Esophagus squamous epithelium (tissue), 5 donors: ENCODE measurements at regions of chr5 and their contacts with region 1.

Region 1: GRCh38 chr5:902129-902916 is 9.6 kb downstream of the TRIP13 start:
- DNase-seq: no peak
- H3K4me3 ChIP-seq: no peak overlapping the region
- H3K27ac ChIP-seq: no peak overlapping the region
- H3K4me1 ChIP-seq: no peaks in the 10 kb centered on the region
- H3K27me3 ChIP-seq: no peaks in the 10 kb centered on the region
- CTCF ChIP-seq: no peak
- POLR2A ChIP-seq: no peak

Region 2: GRCh38 chr5:671459-672328 is 230.6 kb before region 1 on chr5:
- intact Hi-C with region 1: loop called (anchors 5 kb)
- DNase-seq: no peak
- H3K4me3 ChIP-seq: peak overlapping the region in 2 of 4 donors; percentile 7 to 21
- H3K27ac ChIP-seq: peak overlapping the region in 3 of 4 donors; percentile 32 to 68 (median 46)
- H3K4me1 ChIP-seq: peaks cover 41 to 62% (median 41%) of the 10 kb centered on the region in 3 donors
- H3K27me3 ChIP-seq: no peaks in the 10 kb centered on the region
- CTCF ChIP-seq: peak; percentile 73 to 94 (median 90)
- POLR2A ChIP-seq: no peak

Region 3: DNA sequence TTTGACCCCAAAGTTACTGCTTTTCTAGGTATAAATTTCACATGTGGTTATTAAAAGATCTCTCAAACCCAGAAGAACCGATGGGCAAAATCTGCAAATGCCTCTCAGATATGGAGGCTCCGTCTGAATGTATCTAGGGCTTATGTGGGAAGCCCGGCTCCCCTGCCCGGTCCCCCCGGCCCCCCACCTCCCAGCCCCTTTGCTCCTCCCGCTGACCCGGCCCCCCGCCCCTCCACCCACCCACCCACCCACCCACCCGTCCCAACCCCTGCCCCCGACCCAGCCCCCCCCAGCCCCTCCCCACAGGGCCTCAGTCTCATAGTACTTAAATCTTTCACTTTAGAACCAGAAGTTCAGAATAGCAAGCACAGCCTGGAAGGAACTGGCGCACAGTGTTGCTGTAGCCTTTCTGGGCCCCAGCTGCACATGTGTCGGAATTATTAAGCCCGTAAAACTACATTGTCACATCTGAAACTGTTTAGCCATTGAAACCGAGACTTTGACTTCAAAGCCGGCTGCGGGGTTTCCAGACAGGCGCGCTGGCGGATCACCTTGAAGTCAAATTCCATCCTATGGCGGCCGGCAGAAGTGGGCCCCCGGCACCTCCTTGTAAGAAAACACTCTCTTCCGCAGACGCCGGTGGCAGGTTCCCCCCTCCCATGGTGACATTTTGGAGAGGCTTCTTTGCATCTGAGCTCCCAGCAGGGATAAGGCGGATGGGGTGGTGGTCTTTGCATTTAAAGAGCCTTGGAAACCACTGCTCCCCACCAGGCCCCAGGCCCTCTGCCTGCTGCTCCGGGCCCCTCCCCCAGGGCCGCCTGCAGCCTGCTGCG is 119.0 kb after region 1 on chr5:
- intact Hi-C with region 1: no loop called
- DNase-seq: no peak
- H3K4me3 ChIP-seq: no peak overlapping the region
- H3K27ac ChIP-seq: no peak overlapping the region
- H3K4me1 ChIP-seq: peaks cover 0 to 8% (median 0%) of the 10 kb centered on the region in 3 donors
- H3K27me3 ChIP-seq: peaks cover 0 to 16% (median 0%) of the 10 kb centered on the region in 4 donors
- CTCF ChIP-seq: no peak
- POLR2A ChIP-seq: no peak